ENCODE measurements at regions of chr20 and their contacts with region 1.

Region 1: GRCh38 chr20:17682103-17682888 is at the start of gene RRBP1:
- DNase-seq: peak; percentile 96 to 98 (median 98)
- H3K4me3 ChIP-seq: peak within 1 kb of the TSS; percentile 56 to 95 (median 81)
- H3K27ac ChIP-seq: peak within 1 kb of the TSS; percentile 58 to 83
- H3K4me1 ChIP-seq: peaks cover 12 to 23% (median 19%) of the 10 kb centered on the region in 4 experiments
- H3K27me3 ChIP-seq: no peaks in the 10 kb centered on the region

Region 2: DNA sequence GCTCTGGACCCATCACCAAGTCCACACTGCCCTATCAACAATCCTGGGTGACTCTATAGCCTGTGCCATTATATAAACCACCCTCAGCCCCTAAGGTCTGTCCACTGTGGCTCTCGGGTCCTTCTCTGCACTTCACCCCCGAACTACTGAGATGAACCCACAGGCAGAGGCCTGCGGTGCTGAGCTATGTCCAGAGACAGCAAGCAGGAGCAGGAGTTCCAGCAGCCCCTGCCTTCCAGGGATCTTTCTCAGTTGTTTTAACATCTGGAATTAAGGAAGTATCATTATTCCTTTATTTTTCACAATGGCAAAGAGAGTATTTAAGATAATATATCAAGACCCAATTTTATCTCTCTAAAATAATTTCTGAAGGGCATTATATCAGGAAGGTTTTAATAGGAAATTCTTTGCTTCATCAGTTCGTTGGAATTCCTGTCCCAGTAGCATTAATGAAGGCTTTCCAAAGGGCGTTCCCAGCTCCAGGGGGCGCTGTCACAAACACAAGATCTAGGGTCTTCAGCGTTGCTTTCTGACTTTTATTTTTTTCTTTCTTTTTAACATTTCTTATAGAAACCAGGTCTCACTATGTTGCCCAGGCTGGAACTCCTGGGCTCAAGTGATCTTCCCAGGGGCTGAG is 27.5 kb before region 1 on chr20:
- CTCF ChIA-PET with region 1: interaction called, 14 read pairs
- POLR2A ChIA-PET with region 1: interaction called, 4 read pairs
- DNase-seq: peak; percentile 42 to 52 (median 44)
- H3K4me3 ChIP-seq: no peak overlapping the region
- H3K27ac ChIP-seq: no peak overlapping the region
- H3K4me1 ChIP-seq: peaks cover 12 to 35% (median 27%) of the 10 kb centered on the region in 4 experiments
- H3K27me3 ChIP-seq: no peaks in the 10 kb centered on the region

Region 3: GRCh38 chr20:17662333-17663039 is 19.8 kb before region 1 on chr20:
- CTCF ChIA-PET with region 1: interaction called, 17 read pairs
- POLR2A ChIA-PET with region 1: interaction called, 4 read pairs
- DNase-seq: no peak
- H3K4me3 ChIP-seq: no peak overlapping the region
- H3K27ac ChIP-seq: no peak overlapping the region
- H3K4me1 ChIP-seq: peaks cover 20 to 59% (median 44%) of the 10 kb centered on the region in 4 experiments
- H3K27me3 ChIP-seq: no peaks in the 10 kb centered on the region

Region 4: DNA sequence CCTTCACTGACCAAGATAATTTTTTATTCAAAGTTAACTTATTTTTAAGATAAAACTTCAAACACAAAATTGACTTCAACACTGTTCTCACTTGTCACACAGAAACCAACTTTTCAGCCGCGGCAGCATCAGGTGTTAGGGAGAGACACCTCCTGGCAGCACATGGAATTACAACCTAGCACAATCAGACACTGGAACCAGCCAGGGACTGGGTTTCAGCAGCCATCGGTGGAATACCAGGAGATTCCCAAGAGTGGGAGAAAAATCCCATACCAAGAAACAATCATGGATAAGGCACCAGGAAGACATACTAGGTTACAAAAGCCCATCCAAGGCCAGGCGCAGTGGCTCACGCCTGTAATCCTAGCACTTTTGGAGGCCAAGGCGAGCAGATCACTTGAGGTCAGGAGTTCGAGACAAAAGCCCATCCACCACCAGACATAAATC is 216.3 kb after region 1 on chr20:
- CTCF ChIA-PET with region 1: interaction called, 23 read pairs
- POLR2A ChIA-PET with region 1: interaction called, 9 read pairs
- DNase-seq: peak; percentile 55 to 82 (median 80)
- H3K4me3 ChIP-seq: no peak overlapping the region
- H3K27ac ChIP-seq: no peak overlapping the region
- H3K4me1 ChIP-seq: peaks cover 5 to 26% (median 15%) of the 10 kb centered on the region in 4 experiments
- H3K27me3 ChIP-seq: no peaks in the 10 kb centered on the region

Measured in common myeloid progenitor, CD34-positive (primary cell).